ENCODE measurements at regions of chr11 and their contacts with region 1.

Region 1: GRCh38 chr11:65615229-65615941 is at the start of gene PCNX3:
- DNase-seq: peak; percentile 100
- ATAC-seq: peak; percentile 91
- total RNA-seq, gene PCNX3: 12.4 TPM

Region 2: GRCh38 chr11:65516135-65516935 is 99.0 kb before region 1 on chr11:
- intact Hi-C with region 1: no loop called
- DNase-seq: no peak
- ATAC-seq: peak; percentile 14

Region 3: DNA sequence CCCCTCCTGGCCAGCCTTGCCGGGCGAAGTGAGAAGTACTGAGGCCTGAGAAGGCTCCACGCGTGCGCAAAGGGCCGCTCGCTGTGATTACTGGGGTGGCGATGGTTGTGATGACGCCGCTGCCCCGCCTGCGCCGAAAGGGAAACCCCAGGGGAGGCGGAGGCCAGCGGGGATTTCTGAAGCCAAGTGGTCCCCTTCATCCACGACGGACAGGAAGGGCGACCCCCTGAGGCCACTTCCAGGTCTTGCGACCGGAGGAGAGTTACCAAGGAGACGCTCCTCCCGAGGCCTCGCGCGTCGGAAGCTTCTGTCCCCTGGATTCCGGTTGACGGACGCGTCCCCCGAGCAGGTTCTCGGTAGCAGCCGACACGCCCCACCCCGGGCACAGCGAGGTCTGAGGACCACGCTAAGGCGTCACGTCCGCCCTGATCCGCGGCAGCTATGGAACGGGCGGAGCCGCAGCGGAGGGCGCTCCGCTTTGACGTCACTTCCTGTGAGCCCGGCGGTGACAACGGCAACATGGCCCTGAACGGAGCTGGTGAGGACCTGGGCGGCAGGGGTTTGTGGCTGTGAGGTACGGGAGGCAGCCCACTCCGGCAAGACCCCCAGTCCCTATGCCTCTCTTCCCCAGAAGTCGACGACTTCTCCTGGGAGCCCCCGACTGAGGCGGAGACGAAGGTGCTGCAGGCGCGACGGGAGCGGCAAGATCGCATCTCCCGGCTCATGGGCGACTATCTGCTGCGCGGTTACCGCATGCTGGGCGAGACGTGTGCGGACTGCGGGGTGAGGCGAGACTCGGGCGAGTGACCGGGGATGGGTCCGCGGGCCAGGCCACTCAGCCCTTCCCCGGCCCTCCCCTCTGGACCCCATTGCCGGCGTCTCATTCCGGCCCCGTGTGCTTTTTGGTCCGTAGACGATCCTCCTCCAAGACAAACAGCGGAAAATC is 45.1 kb before region 1 on chr11 and contains the start of gene ZNRD2:
- intact Hi-C with region 1: loop called (anchors 1 kb)
- DNase-seq: peak; percentile 99
- ATAC-seq: peak; percentile 90
- total RNA-seq, gene ZNRD2: 23.3 TPM

Region 4: GRCh38 chr11:65580742-65581141 is 34.6 kb before region 1 on chr11:
- intact Hi-C with region 1: no loop called
- DNase-seq: no peak
- ATAC-seq: no peak

Region 5: GRCh38 chr11:65593518-65594298 is 21.7 kb before region 1 on chr11:
- intact Hi-C with region 1: no loop called
- DNase-seq: peak; percentile 69
- ATAC-seq: peak; percentile 40

Region 6: DNA sequence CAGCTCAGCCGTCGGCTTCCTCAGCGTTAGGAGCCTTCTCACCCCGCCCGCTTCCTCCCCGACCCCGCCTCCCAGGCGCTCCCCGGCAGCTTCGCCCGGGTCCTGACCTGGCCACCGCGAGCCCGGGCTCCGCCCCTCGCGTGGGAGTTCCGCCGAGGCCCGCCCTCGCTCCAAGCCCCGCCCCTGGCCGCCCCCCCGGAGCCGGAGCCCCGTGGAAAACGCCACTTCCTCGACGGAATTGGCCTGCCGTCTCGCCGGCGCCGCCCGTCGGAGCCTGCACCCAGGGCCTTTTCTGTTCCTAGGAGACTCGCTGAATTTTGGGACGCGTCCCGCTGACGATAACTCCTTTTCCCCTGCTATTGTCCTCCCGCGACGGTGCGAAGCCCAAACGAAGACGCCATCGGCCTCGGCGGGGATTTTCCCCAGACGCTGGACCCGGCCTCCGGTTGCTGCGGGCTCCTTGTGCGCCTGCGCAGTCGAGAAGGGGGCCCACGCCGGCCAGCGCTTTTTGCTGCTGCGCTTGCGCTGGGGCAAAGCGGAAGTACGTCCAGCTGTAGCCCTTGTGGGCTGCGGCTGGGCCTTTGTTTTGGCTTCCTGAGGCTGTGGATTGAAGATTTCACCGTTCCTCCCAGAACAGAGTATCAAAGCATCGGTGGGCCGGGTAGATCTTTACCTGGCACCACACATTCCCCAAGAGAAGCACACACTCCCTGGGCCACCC is 37.3 kb after region 1 on chr11:
- intact Hi-C with region 1: loop called (anchors 2 kb)
- DNase-seq: peak; percentile 97
- ATAC-seq: peak; percentile 94

Region 7: DNA sequence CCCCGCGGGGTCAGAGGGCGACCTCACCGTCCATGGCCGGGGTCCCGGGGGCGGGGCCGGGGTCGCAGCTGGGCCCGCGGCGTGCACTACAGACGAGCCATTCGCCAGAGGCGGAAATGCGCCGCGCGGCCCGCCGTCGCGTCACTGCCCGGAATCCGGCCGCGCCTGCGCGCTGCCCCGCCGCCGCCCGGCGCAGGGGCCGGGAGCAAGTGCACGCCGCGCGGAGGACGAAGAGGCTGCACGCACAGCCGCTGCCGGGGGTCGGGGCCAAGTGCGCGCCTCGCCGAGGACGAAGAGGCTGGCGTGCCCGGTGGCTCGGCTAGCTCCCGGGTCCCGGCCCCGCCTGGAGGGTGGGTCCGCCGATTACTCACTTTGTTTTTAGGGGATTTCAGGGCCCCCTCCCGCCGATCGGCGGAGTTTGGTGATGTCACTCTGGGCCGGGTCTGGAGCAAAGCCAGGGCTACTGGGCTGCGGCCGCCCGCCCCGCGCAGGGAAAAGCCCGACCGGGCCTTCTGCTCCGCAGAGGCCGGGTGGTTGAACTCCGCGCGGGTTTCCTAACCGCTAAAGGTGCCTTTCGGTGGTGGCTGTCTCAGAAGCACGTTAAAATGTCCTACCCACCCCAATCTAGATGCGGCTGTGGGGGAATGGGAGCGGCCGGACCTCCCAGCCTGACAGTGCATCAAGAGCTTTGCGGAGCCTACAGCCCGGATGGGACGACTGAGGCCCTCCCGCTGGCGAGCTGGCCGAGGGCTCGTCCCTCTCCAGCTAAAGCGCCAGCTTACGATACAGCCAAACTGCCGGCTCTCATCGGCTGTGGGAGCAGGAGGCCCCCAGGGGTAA is 47.6 kb after region 1 on chr11 and contains the start of gene RELA:
- intact Hi-C with region 1: loop called (anchors 2 kb)
- DNase-seq: peak; percentile 96
- ATAC-seq: peak; percentile 92
- total RNA-seq, gene RELA: 36.7 TPM

Measured in Right ventricle myocardium inferior (tissue), 1 donor.